ENCODE measurements at regions of chr11 and their contacts with region 1.

Region 1: GRCh38 chr11:132330515-132330914 is 960.1 kb downstream of the NTM start:
- DNase-seq: no peak
- ATAC-seq: no peak
- H3K4me3 Mint-ChIP-seq: no peak overlapping the region
- H3K27ac Mint-ChIP-seq: no peak overlapping the region
- H3K4me1 Mint-ChIP-seq: peaks cover 32% of the 10 kb centered on the region
- H3K27me3 Mint-ChIP-seq: peaks cover 2% of the 10 kb centered on the region; the same call in 1 of the 2 replicates
- CTCF ChIP-seq: no peak

Region 2: GRCh38 chr11:132300283-132300682 is 30.2 kb before region 1 on chr11:
- CTCF ChIA-PET with region 1: interaction called, 10 read pairs
- POLR2A ChIA-PET with region 1: no interaction called
- DNase-seq: peak; percentile 36
- ATAC-seq: peak; percentile 97
- H3K4me3 Mint-ChIP-seq: no peak overlapping the region
- H3K27ac Mint-ChIP-seq: no peak overlapping the region
- H3K4me1 Mint-ChIP-seq: no peaks in the 10 kb centered on the region
- H3K27me3 Mint-ChIP-seq: no peaks in the 10 kb centered on the region
- CTCF ChIP-seq: peak; percentile 44; the same call in 1 of the 2 replicates

Region 3: DNA sequence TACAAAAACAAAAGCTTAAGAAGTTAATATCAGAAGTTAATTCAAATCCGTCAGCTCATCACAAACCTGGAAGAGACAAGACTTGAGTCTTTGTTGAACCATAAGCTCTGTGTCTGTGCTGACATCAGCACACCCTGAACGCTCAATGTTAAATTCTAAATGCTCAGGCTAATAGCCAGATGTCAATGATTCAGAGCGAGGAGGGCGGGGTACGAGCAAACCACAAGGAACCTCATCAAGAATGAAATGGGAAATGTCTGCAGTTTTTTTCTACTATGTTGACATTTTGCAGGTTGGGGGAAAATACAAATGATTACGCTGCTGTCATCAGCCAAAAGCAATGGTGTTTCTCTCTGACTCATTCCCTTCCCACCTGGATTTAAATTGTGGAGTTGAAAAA is 97.1 kb after region 1 on chr11:
- CTCF ChIA-PET with region 1: no interaction called
- POLR2A ChIA-PET with region 1: no interaction called
- DNase-seq: no peak
- ATAC-seq: no peak
- H3K4me3 Mint-ChIP-seq: no peak overlapping the region
- H3K27ac Mint-ChIP-seq: no peak overlapping the region
- H3K4me1 Mint-ChIP-seq: peaks cover 27% of the 10 kb centered on the region
- H3K27me3 Mint-ChIP-seq: no peaks in the 10 kb centered on the region; the same call in 1 of the 2 replicates
- CTCF ChIP-seq: no peak

Measured in WTC11 (cell line).